ENCODE measurements at regions of chr21 and their contacts with region 1.

Region 1: GRCh38 chr21:14259747-14260146 is 43.8 kb downstream of the RBM11 start:
- DNase-seq: peak in 3 of 14 experiments; percentile 36 to 57 (median 49)
- ATAC-seq: no peak
- H3K4me3 ChIP-seq: no peak overlapping the region
- H3K4me3 Mint-ChIP-seq: no peak overlapping the region
- H3K27ac ChIP-seq: no peak overlapping the region
- H3K27ac Mint-ChIP-seq: no peak overlapping the region
- H3K4me1 ChIP-seq: no peaks in the 10 kb centered on the region
- H3K4me1 Mint-ChIP-seq: no peaks in the 10 kb centered on the region
- H3K27me3 ChIP-seq: no peaks in the 10 kb centered on the region
- H3K27me3 Mint-ChIP-seq: peaks cover 14% of the 10 kb centered on the region
- CTCF ChIP-seq: peak; percentile 70

Region 2: GRCh38 chr21:14737922-14738321 is 478.2 kb after region 1 on chr21:
- CTCF ChIA-PET with region 1: no interaction called
- POLR2A ChIA-PET with region 1: no interaction called
- intact Hi-C with region 1: loop called (anchors 10 kb)
- DNase-seq: peak in 11 of 14 experiments; percentile 8 to 86 (median 34)
- ATAC-seq: peak; percentile 95
- H3K4me3 ChIP-seq: no peak overlapping the region
- H3K4me3 Mint-ChIP-seq: no peak overlapping the region
- H3K27ac ChIP-seq: no peak overlapping the region
- H3K27ac Mint-ChIP-seq: no peak overlapping the region
- H3K4me1 ChIP-seq: no peaks in the 10 kb centered on the region
- H3K4me1 Mint-ChIP-seq: peaks cover 5% of the 10 kb centered on the region
- H3K27me3 ChIP-seq: no peaks in the 10 kb centered on the region
- H3K27me3 Mint-ChIP-seq: no peaks in the 10 kb centered on the region
- CTCF ChIP-seq: peak; percentile 75

Region 3: GRCh38 chr21:14773777-14774345 is 514.1 kb after region 1 on chr21:
- CTCF ChIA-PET with region 1: no interaction called
- POLR2A ChIA-PET with region 1: no interaction called
- intact Hi-C with region 1: loop called (anchors 5 to 10 kb)
- DNase-seq: peak; percentile 25 to 70 (median 43)
- ATAC-seq: peak; percentile 54
- H3K4me3 ChIP-seq: no peak overlapping the region
- H3K4me3 Mint-ChIP-seq: no peak overlapping the region
- H3K27ac ChIP-seq: no peak overlapping the region
- H3K27ac Mint-ChIP-seq: no peak overlapping the region
- H3K4me1 ChIP-seq: no peaks in the 10 kb centered on the region
- H3K4me1 Mint-ChIP-seq: no peaks in the 10 kb centered on the region
- H3K27me3 ChIP-seq: peaks cover 4% of the 10 kb centered on the region in 2 experiments
- H3K27me3 Mint-ChIP-seq: no peaks in the 10 kb centered on the region
- CTCF ChIP-seq: peak; percentile 71

Region 4: GRCh38 chr21:14864211-14865021 is 604.7 kb after region 1 on chr21:
- CTCF ChIA-PET with region 1: no interaction called
- POLR2A ChIA-PET with region 1: no interaction called
- intact Hi-C with region 1: loop called in 1 of 2 experiments (anchors 2 kb)
- DNase-seq: peak in 5 of 14 experiments; percentile 7 to 66 (median 24)
- ATAC-seq: peak; percentile 49
- H3K4me3 ChIP-seq: no peak overlapping the region
- H3K4me3 Mint-ChIP-seq: no peak overlapping the region
- H3K27ac ChIP-seq: no peak overlapping the region
- H3K27ac Mint-ChIP-seq: no peak overlapping the region
- H3K4me1 ChIP-seq: no peaks in the 10 kb centered on the region
- H3K4me1 Mint-ChIP-seq: peaks cover 6% of the 10 kb centered on the region
- H3K27me3 ChIP-seq: no peaks in the 10 kb centered on the region
- H3K27me3 Mint-ChIP-seq: no peaks in the 10 kb centered on the region
- CTCF ChIP-seq: peak; percentile 29